HEK293 (cell line): ENCODE measurements at regions of chr1 and their contacts with region 1.

Region 1: GRCh38 chr1:118077331-118078055 is 107.5 kb downstream of the SPAG17 start:
- H3K4me3 ChIP-seq: no peak overlapping the region
- H3K27ac ChIP-seq: no peak overlapping the region
- H3K4me1 ChIP-seq: no peaks in the 10 kb centered on the region
- CTCF ChIP-seq: no peak

Region 2: DNA sequence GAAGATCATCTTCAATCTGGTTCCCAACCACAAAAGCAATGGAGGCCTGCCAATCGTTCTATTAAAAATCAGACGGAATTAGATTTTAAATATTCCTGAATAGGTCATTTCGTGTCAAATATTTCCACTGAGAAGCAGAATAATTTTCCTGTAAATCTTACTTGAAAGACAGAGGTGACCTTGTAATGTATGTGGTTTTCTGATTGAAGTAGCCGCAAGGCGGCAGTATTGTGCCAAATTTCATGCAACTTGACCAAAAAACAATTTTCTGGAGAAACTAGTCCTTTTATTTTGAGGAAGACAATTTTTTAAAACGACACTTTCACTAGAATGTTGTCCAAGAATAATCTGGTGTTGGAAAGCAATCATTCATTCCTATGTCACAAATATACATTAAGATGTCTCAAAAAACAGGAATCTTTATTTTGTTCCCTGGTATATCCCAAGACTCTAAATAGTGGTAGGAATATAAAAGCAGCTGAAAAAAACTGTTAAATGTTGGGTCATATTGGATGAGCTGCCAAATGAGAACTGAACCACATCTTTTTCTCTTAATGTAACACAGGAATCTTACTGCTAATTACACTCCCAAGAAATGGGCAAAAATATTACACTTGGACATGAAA is 73.9 kb after region 1 on chr1:
- CTCF ChIA-PET with region 1: interaction called, 11 read pairs
- POLR2A ChIA-PET with region 1: no interaction called
- H3K4me3 ChIP-seq: no peak overlapping the region
- H3K27ac ChIP-seq: no peak overlapping the region
- H3K4me1 ChIP-seq: no peaks in the 10 kb centered on the region
- CTCF ChIP-seq: peak; percentile 51; the same call in 1 of the 2 replicates